Activated CD4-positive, alpha-beta T cell treated with anti-CD3 and anti-CD28 coated beads for 36 hours (primary cell): ENCODE measurements at regions of chr11 and their contacts with region 1.

Region 1: DNA sequence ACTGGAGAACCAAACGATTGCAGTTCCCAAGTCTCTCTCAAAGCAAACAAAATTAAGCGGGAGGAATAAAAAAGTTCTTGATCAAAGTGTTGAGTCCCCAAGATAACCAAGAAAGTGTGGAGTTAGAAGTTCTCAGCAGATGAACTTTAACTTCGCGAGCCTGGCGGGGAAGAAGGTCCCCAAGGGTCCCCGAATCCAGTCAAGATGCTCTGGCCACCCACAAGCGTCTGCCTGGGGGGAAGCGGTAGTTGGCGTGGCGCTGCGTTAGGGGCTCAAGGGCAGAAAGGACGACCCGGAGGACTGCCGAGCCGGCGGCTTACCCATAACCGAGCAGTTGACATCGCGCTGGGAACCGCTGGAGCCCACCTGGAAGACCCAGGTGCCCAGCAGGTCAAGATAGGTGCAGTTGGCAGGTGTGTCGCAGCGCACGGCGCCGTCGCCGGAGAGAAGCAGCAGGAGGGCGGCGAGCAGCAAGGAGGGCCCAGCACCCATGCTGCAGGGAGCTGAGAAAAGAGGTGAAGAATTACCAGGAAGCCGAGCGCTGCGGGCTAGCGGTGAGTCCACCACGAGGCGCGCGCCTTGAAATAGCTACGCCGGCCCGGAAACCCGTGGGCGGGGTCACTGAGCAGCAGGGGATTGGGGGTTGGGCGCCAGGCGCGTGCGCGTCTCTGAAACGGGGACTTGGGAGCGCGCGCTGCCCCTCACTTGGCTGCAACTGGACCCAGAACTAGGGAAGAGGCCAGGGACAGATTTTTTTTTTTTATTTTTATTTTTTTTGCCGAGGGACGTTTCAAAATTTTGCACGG is at the start of gene CTSC:
- DNase-seq: peak; percentile 97
- ATAC-seq: peak; percentile 78
- H3K4me3 Mint-ChIP-seq: peak within 1 kb of the TSS; percentile 99
- H3K27ac Mint-ChIP-seq: peak within 1 kb of the TSS; percentile 89
- H3K4me1 Mint-ChIP-seq: peaks cover 47% of the 10 kb centered on the region
- H3K27me3 Mint-ChIP-seq: no peaks in the 10 kb centered on the region
- total RNA-seq, gene CTSC: 53.1 to 59.4 TPM

Region 2: GRCh38 chr11:87972133-87972532 is 365.3 kb before region 1 on chr11:
- CTCF ChIA-PET with region 1: no interaction called
- POLR2A ChIA-PET with region 1: no interaction called
- intact Hi-C with region 1: no loop called
- DNase-seq: no peak
- ATAC-seq: no peak
- H3K4me3 Mint-ChIP-seq: no peak overlapping the region
- H3K27ac Mint-ChIP-seq: no peak overlapping the region
- H3K4me1 Mint-ChIP-seq: no peaks in the 10 kb centered on the region
- H3K27me3 Mint-ChIP-seq: peaks cover 10% of the 10 kb centered on the region

Region 3: GRCh38 chr11:88229303-88229702 is 108.1 kb before region 1 on chr11:
- CTCF ChIA-PET with region 1: no interaction called
- POLR2A ChIA-PET with region 1: no interaction called
- intact Hi-C with region 1: no loop called
- DNase-seq: no peak
- ATAC-seq: no peak
- H3K4me3 Mint-ChIP-seq: no peak overlapping the region
- H3K27ac Mint-ChIP-seq: no peak overlapping the region
- H3K4me1 Mint-ChIP-seq: no peaks in the 10 kb centered on the region
- H3K27me3 Mint-ChIP-seq: no peaks in the 10 kb centered on the region

Region 4: DNA sequence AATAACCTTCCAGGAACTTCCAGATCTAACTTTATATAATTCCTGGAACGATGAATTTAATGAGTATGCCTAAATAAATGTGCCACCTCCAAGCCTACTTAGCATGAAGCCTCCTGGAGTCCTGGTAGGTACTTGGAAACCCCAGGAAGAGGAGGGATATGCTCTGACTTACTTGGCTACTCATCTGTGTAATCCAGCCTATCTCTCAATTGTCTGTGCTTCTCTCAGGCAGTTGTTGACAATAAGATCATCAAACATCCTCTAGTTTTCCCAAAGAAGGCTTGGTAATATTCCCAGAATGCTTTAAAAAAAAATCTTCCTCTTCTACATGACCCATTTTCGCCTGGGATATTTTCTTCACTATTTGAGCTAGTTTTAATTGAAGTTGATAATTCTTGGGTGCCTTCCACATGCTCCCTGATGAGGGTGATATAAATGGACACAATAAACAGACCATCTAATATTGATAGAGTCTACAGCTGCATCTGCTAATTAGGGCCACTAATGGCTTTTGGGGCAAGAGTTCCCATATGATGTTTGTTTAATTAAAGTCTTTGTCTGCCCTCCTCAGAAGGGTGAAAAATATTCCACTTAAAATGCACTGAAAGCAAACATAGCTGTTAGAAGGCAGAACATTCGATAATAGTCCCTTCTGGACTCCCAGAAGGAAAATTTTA is 86.7 kb before region 1 on chr11:
- CTCF ChIA-PET with region 1: no interaction called
- POLR2A ChIA-PET with region 1: no interaction called
- intact Hi-C with region 1: no loop called
- DNase-seq: no peak
- ATAC-seq: no peak
- H3K4me3 Mint-ChIP-seq: no peak overlapping the region
- H3K27ac Mint-ChIP-seq: no peak overlapping the region
- H3K4me1 Mint-ChIP-seq: no peaks in the 10 kb centered on the region
- H3K27me3 Mint-ChIP-seq: no peaks in the 10 kb centered on the region

Region 5: GRCh38 chr11:88301488-88302140 is 35.8 kb before region 1 on chr11:
- CTCF ChIA-PET with region 1: no interaction called
- POLR2A ChIA-PET with region 1: interaction called, 9 read pairs
- intact Hi-C with region 1: loop called (anchors 2 kb)
- DNase-seq: peak; percentile 16
- ATAC-seq: peak; percentile 54
- H3K4me3 Mint-ChIP-seq: no peak overlapping the region
- H3K27ac Mint-ChIP-seq: peak overlapping the region; percentile 89
- H3K4me1 Mint-ChIP-seq: peaks cover 33% of the 10 kb centered on the region
- H3K27me3 Mint-ChIP-seq: no peaks in the 10 kb centered on the region

Region 6: GRCh38 chr11:88414385-88414861 is 77.0 kb after region 1 on chr11:
- CTCF ChIA-PET with region 1: no interaction called
- POLR2A ChIA-PET with region 1: no interaction called
- intact Hi-C with region 1: loop called in 1 of 2 experiments (anchors 2 kb)
- DNase-seq: peak; percentile 39
- ATAC-seq: peak; percentile 26
- H3K4me3 Mint-ChIP-seq: peak overlapping the region; percentile 28
- H3K27ac Mint-ChIP-seq: peak overlapping the region; percentile 79
- H3K4me1 Mint-ChIP-seq: peaks cover 39% of the 10 kb centered on the region
- H3K27me3 Mint-ChIP-seq: no peaks in the 10 kb centered on the region

Region 7: GRCh38 chr11:88421530-88421929 is 84.1 kb after region 1 on chr11:
- CTCF ChIA-PET with region 1: interaction called, 3 read pairs
- POLR2A ChIA-PET with region 1: interaction called, 3 read pairs
- intact Hi-C with region 1: loop called in 1 of 2 experiments (anchors 1 kb)
- DNase-seq: peak; percentile 69
- ATAC-seq: peak; percentile 93
- H3K4me3 Mint-ChIP-seq: no peak overlapping the region
- H3K27ac Mint-ChIP-seq: peak overlapping the region; percentile 91
- H3K4me1 Mint-ChIP-seq: peaks cover 62% of the 10 kb centered on the region
- H3K27me3 Mint-ChIP-seq: no peaks in the 10 kb centered on the region

Region 8: DNA sequence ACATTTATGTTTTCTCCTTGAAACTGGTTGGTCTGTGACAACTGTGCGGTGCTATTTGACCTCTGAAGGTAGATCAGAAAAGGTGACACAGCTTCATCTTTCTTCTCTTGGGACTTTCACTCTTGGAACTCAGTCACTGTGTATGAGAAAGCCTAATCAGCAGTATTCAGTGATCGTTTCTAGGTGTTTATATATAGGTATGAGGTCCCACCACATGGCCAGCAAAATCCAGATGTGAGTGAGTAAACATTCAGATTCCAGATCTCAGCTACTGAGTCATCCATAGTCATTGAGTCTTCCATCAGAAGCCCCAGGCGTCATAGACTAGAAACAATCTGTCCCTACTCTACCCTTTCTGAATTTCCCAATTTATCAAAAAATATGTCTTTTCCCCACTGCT is 117.5 kb after region 1 on chr11:
- CTCF ChIA-PET with region 1: no interaction called
- POLR2A ChIA-PET with region 1: no interaction called
- intact Hi-C with region 1: no loop called
- DNase-seq: no peak
- ATAC-seq: no peak
- H3K4me3 Mint-ChIP-seq: no peak overlapping the region
- H3K27ac Mint-ChIP-seq: no peak overlapping the region
- H3K4me1 Mint-ChIP-seq: no peaks in the 10 kb centered on the region
- H3K27me3 Mint-ChIP-seq: no peaks in the 10 kb centered on the region